ENCODE measurements at regions of chr1 and their contacts with region 1.

Region 1: GRCh38 chr1:21255278-21255942 is 34.9 kb downstream of the ECE1 start:
- DNase-seq: peak; percentile 57
- H3K4me3 Mint-ChIP-seq: no peak overlapping the region
- H3K27ac Mint-ChIP-seq: peak overlapping the region; percentile 75
- H3K4me1 Mint-ChIP-seq: peaks cover 43% of the 10 kb centered on the region
- H3K27me3 Mint-ChIP-seq: no peaks in the 10 kb centered on the region

Region 2: GRCh38 chr1:21334214-21335087 is 79.0 kb after region 1 on chr1:
- intact Hi-C with region 1: loop called (anchors 1 kb)
- DNase-seq: peak; percentile 80
- H3K4me3 Mint-ChIP-seq: peak overlapping the region; percentile 84
- H3K27ac Mint-ChIP-seq: peak overlapping the region; percentile 95
- H3K4me1 Mint-ChIP-seq: peaks cover 85% of the 10 kb centered on the region
- H3K27me3 Mint-ChIP-seq: no peaks in the 10 kb centered on the region

Measured in activated T-helper 1 cell treated with anti-CD3 and anti-CD28 coated beads, Interleukin-12 subunit alpha, Interleukin-12 subunit beta, Interleukin-2, Interleukin-4 antibody, amounts not matched to agents 30 ng/mL and 10 ng/mL and 1 ng/mL, durations not matched to agents 14 hours and 24 hours and 36 hours (primary cell).